Astrocyte of the cerebellum (primary cell): ENCODE measurements at regions of chr1 and their contacts with region 1.

Region 1: GRCh38 chr1:225923692-225924555 is at the start of gene PYCR2:
- DNase-seq: peak; percentile 86
- H3K4me3 ChIP-seq: peak within 1 kb of the TSS; percentile 89
- CTCF ChIP-seq: no peak

Region 2: GRCh38 chr1:225817611-225818061 is 106.3 kb before region 1 on chr1:
- in situ Hi-C with region 1: loop called (anchors 5 kb)
- DNase-seq: peak; percentile 69
- H3K4me3 ChIP-seq: no peak overlapping the region
- CTCF ChIP-seq: no peak

Region 3: DNA sequence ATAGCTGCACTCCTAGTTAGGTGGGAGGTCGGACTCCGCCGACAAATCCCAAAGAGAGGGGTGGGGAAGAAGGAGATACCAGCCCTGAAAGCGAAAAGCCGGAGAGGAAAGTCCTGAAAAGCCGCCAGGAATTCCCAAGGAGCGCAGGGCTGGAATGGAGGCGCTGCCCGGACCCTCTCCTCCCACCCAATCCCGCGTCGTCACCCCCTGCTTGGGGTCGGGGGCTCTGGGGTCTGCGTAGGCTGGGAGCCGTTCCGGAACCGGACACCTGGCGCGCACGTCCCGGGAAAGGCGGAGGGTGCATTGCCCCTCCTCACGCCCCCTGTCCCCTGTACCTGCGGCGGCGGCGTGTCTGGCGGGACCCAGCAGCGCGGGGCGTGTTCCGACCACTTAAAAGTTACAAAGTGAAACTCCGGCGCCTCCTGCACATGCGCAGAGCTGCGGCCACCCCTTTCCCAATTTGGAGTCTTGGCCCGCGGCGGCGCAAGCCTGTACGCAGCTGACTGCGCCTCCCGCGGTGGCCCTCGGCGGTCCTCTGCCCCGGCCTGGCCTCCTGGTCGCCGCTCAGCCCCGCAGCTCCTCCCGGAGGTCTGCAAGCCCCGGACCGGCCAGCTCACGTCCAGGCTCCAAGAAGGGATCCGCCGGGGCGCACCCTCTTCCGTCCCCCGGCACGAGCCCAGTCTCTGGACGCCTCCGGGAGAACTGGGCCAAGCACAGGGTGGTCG is 41.8 kb before region 1 on chr1 and contains the start of gene TMEM63A:
- in situ Hi-C with region 1: loop called (anchors 5 kb)
- DNase-seq: peak; percentile 48
- H3K4me3 ChIP-seq: peak within 1 kb of the TSS; percentile 93
- CTCF ChIP-seq: no peak